T-cell (primary cell): ENCODE measurements at regions of chr7 and their contacts with region 1.

Region 1: DNA sequence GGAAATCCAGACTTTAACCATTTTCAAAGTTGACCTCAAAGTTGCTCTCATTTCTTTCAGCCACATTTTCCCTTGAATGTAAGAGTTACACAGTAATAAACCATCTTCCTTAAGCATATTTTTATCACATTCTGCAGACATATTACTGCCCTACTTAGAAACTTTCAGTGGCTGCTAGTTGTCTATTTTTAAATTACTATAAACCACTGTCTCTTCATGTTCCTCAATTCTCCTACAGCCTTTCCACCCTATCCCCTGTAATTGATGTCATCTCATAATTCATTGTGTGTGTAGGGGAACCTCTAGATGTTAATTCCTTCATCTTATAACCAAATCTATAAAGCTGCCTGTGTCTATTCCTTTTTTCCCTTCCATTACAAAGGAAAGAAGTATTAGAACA is 78.1 kb upstream of the STRIP2 start:
- DNase-seq: no peak
- ATAC-seq: no peak
- H3K4me3 ChIP-seq: no peak overlapping the region
- H3K4me3 Mint-ChIP-seq: no peak overlapping the region
- H3K27ac ChIP-seq: no peak overlapping the region
- H3K27ac Mint-ChIP-seq: no peak overlapping the region
- H3K4me1 ChIP-seq: no peaks in the 10 kb centered on the region
- H3K4me1 Mint-ChIP-seq: peaks cover 0 to 3% (median 0%) of the 10 kb centered on the region in 3 donors
- H3K27me3 ChIP-seq: no peaks in the 10 kb centered on the region
- H3K27me3 Mint-ChIP-seq: no peaks in the 10 kb centered on the region

Region 2: DNA sequence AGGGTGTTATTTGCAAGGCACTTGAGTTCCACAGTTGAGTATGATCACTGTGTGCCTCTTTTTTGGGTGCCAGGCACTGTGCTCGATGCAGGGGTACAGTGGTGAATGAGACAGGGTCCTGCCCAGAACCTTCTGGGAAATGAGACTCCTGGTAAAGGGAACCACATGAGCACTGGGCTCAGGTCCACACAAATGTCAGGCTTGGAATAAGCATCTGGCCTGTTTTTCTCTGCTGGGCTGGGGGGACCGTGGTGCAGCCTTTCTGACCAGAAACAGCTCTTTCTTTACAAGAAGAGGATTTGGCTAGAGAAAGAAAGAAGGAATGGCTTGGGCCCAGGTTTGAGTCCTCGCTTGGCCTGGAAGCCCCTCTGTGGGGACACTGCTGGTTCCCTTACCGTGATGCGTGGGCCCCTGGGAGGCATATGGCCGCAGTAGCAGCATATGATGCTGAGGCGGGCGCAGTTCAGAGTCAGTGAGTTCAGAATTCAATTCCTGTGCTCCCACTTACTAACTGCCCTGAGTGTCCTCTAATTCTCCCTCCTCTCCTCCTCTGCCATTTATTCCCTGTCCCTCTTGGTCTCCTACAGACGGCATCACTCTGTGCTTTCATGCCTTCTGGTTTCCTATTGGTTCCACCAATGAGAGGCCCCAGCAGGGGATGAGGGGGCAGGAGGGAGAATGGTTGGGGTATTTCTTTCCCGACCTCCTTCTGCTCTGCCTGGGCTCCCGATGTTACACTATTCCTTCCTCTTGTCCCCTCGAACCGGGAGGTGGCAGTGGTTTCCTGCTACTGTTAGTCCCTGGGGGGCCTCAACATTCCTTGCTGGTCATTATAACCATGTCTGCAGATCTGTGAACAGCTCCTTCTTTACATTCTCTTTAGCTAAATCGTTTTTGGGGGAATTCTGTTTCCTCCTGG is 436.0 kb before region 1 on chr7:
- CTCF ChIA-PET with region 1: no interaction called
- POLR2A ChIA-PET with region 1: no interaction called
- DNase-seq: peak in 1 of 35 experiments; percentile 9
- ATAC-seq: no peak
- H3K4me3 ChIP-seq: no peak overlapping the region
- H3K4me3 Mint-ChIP-seq: no peak overlapping the region
- H3K27ac ChIP-seq: no peak overlapping the region
- H3K27ac Mint-ChIP-seq: no peak overlapping the region
- H3K4me1 ChIP-seq: peaks cover 0 to 5% of the 10 kb centered on the region in 2 experiments
- H3K4me1 Mint-ChIP-seq: peaks cover 4 to 10% (median 5%) of the 10 kb centered on the region in 3 donors
- H3K27me3 ChIP-seq: peaks cover 0 to 49% of the 10 kb centered on the region in 2 experiments
- H3K27me3 Mint-ChIP-seq: peaks cover 32 to 49% of the 10 kb centered on the region in 2 donors

Region 3: GRCh38 chr7:129084801-129085551 is 271.2 kb before region 1 on chr7:
- CTCF ChIA-PET with region 1: interaction called in 1 of 2 experiments, 12 read pairs
- POLR2A ChIA-PET with region 1: no interaction called
- DNase-seq: no peak
- ATAC-seq: no peak
- H3K4me3 ChIP-seq: no peak overlapping the region
- H3K4me3 Mint-ChIP-seq: no peak overlapping the region
- H3K27ac ChIP-seq: no peak overlapping the region
- H3K27ac Mint-ChIP-seq: no peak overlapping the region
- H3K4me1 ChIP-seq: no peaks in the 10 kb centered on the region
- H3K4me1 Mint-ChIP-seq: no peaks in the 10 kb centered on the region
- H3K27me3 ChIP-seq: peaks cover 0 to 2% of the 10 kb centered on the region in 2 experiments
- H3K27me3 Mint-ChIP-seq: no peaks in the 10 kb centered on the region